ENCODE measurements at regions of chr1 and their contacts with region 1.

Region 1: GRCh38 chr1:32870615-32871363 is at the start of gene FNDC5:
- DNase-seq: no peak
- H3K4me3 Mint-ChIP-seq: peak within 1 kb of the TSS; percentile 56
- H3K27ac Mint-ChIP-seq: no peak within 1 kb of the TSS
- H3K4me1 Mint-ChIP-seq: peaks cover 6% of the 10 kb centered on the region
- H3K27me3 Mint-ChIP-seq: peaks cover 48% of the 10 kb centered on the region
- total RNA-seq, gene FNDC5: not detected in 2 replicates

Region 2: GRCh38 chr1:32400876-32401631 is 469.7 kb before region 1 on chr1:
- intact Hi-C with region 1: loop called (anchors 2 kb)
- DNase-seq: peak; percentile 10
- H3K4me3 Mint-ChIP-seq: no peak overlapping the region
- H3K27ac Mint-ChIP-seq: no peak overlapping the region
- H3K4me1 Mint-ChIP-seq: no peaks in the 10 kb centered on the region
- H3K27me3 Mint-ChIP-seq: peaks cover 20% of the 10 kb centered on the region

Region 3: DNA sequence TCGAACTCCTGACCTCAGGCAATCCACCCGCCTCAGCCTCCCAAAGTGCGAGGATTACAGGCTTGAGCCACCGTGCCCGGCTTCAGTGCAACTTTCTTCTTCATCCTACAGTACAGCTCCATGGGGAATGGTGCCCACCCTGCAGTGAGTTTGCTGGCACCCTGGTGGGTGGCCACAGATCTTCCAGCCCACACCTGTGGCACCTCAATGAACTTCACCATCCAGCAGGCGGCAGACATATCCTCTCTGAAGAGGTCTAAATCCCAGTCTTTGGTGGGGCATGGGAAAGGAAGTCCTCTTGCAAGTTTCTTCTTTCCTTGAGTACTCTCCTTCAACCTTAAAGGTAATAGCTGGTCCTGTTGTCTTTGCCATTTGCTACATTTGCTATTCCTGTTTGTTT is 349.6 kb before region 1 on chr1:
- intact Hi-C with region 1: loop called (anchors 1 kb)
- DNase-seq: no peak
- H3K4me3 Mint-ChIP-seq: peak overlapping the region; percentile 50
- H3K27ac Mint-ChIP-seq: peak overlapping the region; percentile 20
- H3K4me1 Mint-ChIP-seq: peaks cover 5% of the 10 kb centered on the region
- H3K27me3 Mint-ChIP-seq: peaks cover 7% of the 10 kb centered on the region

Region 4: GRCh38 chr1:32716312-32717148 is 154.3 kb before region 1 on chr1:
- intact Hi-C with region 1: loop called (anchors 1 kb)
- DNase-seq: peak; percentile 60
- H3K4me3 Mint-ChIP-seq: no peak overlapping the region
- H3K27ac Mint-ChIP-seq: no peak overlapping the region
- H3K4me1 Mint-ChIP-seq: peaks cover 10% of the 10 kb centered on the region
- H3K27me3 Mint-ChIP-seq: peaks cover 12% of the 10 kb centered on the region

Region 5: GRCh38 chr1:32848354-32849063 is 22.3 kb before region 1 on chr1:
- intact Hi-C with region 1: no loop called
- DNase-seq: no peak
- H3K4me3 Mint-ChIP-seq: no peak overlapping the region
- H3K27ac Mint-ChIP-seq: no peak overlapping the region
- H3K4me1 Mint-ChIP-seq: no peaks in the 10 kb centered on the region
- H3K27me3 Mint-ChIP-seq: no peaks in the 10 kb centered on the region